Posterior vena cava (tissue), 2 donors: ENCODE measurements at regions of chr11 and their contacts with region 1.

Region 1: GRCh38 chr11:86335122-86335767 is 33.2 kb downstream of the HIKESHI start:
- DNase-seq: no peak

Region 2: DNA sequence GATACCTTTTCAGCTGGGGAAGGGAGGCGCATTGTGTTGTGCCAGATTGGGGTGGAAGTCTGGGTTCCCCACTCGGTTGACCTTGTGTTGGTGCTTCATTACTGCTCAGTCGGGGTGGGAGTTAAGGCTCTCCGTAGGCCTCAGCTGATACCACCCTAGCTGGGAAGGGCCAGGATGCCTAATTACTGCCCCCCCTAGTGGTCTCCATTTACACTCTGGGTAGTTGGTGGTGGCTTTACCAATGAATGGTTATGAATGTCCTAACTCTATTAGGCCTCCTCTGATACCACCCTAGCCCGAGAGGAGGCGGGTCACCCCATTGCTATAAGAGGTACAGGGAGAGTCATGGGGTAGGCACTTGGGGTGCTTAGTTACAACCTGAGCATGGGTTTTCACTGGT is 60.7 kb before region 1 on chr11:
- intact Hi-C with region 1: loop called in 1 of 2 experiments (anchors 10 kb)
- DNase-seq: no peak

Region 3: GRCh38 chr11:86370922-86371594 is 35.8 kb after region 1 on chr11:
- intact Hi-C with region 1: no loop called
- DNase-seq: no peak